ENCODE measurements at regions of chr18 and their contacts with region 1.

Region 1: DNA sequence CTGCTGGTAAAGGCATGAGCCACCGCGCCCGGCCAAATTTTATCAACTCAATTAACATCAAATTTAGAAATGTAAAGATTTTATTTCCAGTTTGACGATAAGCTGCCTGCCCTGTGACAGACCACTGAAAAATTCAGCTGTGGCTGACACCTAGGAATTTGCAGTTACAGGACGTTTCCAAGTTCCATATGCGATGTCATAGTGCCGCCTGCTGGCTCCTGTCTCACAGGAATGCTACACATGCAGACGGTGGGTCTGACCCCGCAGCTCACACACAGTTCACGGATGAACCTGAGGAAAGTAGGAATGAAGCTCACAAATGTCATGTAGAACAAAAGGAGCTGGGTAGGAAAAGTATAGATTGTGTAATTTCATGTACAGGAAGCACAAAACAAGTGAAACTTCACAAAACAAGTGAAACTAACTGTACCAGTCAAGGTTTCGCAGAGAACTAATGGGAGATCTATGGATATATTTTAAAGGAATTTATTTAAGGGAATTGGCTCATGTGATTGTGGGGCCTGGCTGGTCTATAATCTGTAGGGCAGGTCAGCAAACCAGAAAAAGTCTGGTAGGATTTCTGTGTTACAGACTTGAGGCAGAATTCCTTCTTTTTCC is 13.2 kb upstream of the SEH1L start:
- DNase-seq: peak; percentile 92
- H3K4me3 Mint-ChIP-seq: peak overlapping the region; percentile 16
- H3K27ac Mint-ChIP-seq: no peak overlapping the region
- H3K4me1 Mint-ChIP-seq: peaks cover 3% of the 10 kb centered on the region
- H3K27me3 Mint-ChIP-seq: peaks cover 25% of the 10 kb centered on the region

Region 2: GRCh38 chr18:12391618-12392165 is 542.9 kb before region 1 on chr18:
- intact Hi-C with region 1: loop called (anchors 5 kb)
- DNase-seq: peak; percentile 85
- H3K4me3 Mint-ChIP-seq: no peak overlapping the region
- H3K27ac Mint-ChIP-seq: no peak overlapping the region
- H3K4me1 Mint-ChIP-seq: no peaks in the 10 kb centered on the region
- H3K27me3 Mint-ChIP-seq: peaks cover 6% of the 10 kb centered on the region

Region 3: GRCh38 chr18:12520442-12520992 is 414.0 kb before region 1 on chr18:
- intact Hi-C with region 1: no loop called
- DNase-seq: no peak
- H3K4me3 Mint-ChIP-seq: no peak overlapping the region
- H3K27ac Mint-ChIP-seq: no peak overlapping the region
- H3K4me1 Mint-ChIP-seq: no peaks in the 10 kb centered on the region
- H3K27me3 Mint-ChIP-seq: peaks cover 11% of the 10 kb centered on the region

Region 4: DNA sequence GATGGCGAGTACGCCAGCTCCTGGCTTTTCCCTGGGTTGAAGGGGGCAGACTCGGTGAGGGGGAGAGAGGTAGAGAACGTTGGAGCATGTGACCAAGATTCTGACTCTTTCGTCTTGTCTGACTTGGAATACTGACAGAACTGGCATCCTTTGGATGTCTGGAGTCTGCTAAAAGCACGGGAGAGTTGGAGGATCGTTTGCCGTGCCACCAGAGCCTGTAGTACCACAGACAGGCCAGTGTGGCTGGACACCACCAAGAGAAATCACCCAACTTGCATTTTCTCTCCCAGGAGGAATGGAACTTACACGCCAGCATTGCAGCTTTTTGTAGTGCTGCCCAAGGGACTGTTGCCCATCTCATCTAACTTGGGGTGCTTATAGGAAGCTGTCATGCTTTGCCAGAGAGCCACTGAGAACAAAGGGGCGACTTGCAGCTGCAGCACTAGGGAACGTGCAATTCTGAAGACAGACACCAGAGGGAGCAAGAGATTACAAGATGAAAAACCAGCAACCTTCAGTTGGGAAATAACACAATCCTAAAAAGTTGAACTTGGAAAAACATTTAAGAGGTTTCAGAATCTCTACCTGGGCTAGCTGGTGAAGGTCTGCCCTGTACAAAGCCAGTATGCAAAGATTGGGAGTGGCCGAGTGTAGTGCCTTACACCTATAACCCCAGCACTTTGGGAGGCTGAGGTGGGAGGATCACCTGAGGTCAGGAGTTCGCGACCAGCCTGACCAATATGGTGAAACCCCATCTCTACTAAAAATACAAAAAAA is 207.6 kb before region 1 on chr18:
- intact Hi-C with region 1: loop called (anchors 1 kb)
- DNase-seq: peak; percentile 90
- H3K4me3 Mint-ChIP-seq: no peak overlapping the region
- H3K27ac Mint-ChIP-seq: no peak overlapping the region
- H3K4me1 Mint-ChIP-seq: peaks cover 3% of the 10 kb centered on the region
- H3K27me3 Mint-ChIP-seq: no peaks in the 10 kb centered on the region

Region 5: DNA sequence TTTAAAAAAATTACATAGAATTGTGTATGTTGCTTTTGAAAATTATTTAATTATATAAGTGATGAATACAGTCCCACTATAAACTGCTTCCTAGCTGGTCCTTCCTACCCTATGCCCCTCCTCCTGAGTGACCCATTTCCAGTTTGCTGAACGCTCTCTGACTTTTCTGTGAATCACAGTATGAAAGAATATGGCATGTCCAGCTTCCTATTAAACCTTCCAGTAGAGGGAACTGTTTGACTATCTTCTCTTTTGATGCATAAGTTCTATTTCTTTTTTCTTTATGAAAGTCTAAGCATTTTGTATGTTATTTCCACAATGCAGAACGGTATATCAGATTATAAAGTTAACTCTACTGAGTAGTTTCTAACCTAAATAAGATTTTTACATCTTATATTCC is 190.5 kb before region 1 on chr18:
- intact Hi-C with region 1: loop called (anchors 1 kb)
- DNase-seq: no peak
- H3K4me3 Mint-ChIP-seq: no peak overlapping the region
- H3K27ac Mint-ChIP-seq: no peak overlapping the region
- H3K4me1 Mint-ChIP-seq: peaks cover 4% of the 10 kb centered on the region
- H3K27me3 Mint-ChIP-seq: no peaks in the 10 kb centered on the region

Region 6: DNA sequence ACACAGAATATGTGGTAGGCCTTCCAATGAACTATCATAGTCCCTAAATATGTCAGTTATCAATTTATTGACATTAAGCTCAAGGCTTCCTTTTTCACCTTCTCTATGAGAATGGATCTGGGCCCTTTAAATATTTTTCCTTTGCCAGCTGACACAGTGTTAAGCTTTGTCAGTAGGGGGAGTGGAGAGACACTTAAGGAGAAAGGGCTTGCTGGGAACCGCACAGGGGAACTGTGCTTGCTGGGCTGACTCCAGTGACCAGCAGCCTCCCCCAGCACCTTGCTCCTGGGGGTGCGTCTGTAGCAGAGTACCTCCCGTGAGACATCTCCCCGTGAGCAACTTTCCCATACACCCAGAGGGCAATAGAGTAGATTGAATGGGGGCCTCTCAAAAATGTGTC is 44.1 kb before region 1 on chr18:
- intact Hi-C with region 1: loop called (anchors 5 kb)
- DNase-seq: no peak
- H3K4me3 Mint-ChIP-seq: no peak overlapping the region
- H3K27ac Mint-ChIP-seq: no peak overlapping the region
- H3K4me1 Mint-ChIP-seq: peaks cover 16% of the 10 kb centered on the region
- H3K27me3 Mint-ChIP-seq: peaks cover 5% of the 10 kb centered on the region

Region 7: DNA sequence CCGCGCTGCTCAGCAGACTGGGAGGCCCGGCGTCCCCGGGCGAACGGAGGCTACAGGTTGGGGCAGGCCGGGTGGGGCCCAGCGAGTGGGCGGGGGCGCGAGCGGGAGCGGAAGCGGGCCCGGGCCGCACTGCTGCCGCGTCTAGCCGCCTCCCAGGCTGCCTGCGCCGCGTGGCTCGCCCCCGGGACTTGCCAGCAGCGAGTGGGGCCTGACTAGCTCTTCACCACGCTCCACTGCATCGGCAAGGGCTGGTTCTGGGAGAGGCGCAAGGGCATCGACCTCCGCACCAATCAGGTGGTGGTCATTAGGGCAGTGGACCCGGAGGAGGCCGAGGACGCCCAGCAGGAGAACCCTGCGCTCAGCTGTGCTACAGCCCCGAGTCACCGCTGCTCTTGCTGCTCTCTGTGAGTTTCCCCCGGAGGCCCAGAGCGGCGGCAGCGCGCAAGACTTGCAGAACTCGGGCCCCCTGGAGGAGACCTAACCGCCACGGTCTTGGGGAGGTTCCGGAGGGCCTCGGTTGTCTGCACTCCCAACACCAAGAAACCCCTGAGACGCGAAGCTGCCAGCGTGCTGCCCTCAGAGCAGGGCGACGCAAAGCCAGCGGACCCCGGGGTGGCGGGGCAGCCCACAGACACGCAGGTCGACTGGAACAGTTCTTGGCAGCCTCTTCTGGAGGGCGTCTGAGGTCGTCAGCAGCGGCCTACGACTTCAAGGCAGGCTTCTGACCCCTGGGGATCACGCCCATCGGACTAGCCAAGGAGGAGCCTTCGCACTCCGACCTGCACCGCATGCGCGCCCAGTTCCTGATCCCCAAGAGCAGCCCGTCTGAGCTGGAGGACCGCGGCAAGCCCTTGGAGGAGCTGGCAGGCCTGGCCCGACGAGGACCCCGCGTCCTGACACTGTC is 23.3 kb before region 1 on chr18:
- intact Hi-C with region 1: no loop called
- DNase-seq: peak; percentile 86
- H3K4me3 Mint-ChIP-seq: peak overlapping the region; percentile 63
- H3K27ac Mint-ChIP-seq: no peak overlapping the region
- H3K4me1 Mint-ChIP-seq: peaks cover 6% of the 10 kb centered on the region
- H3K27me3 Mint-ChIP-seq: peaks cover 20% of the 10 kb centered on the region